ENCODE measurements at regions of chr5 and their contacts with region 1.

Region 1: DNA sequence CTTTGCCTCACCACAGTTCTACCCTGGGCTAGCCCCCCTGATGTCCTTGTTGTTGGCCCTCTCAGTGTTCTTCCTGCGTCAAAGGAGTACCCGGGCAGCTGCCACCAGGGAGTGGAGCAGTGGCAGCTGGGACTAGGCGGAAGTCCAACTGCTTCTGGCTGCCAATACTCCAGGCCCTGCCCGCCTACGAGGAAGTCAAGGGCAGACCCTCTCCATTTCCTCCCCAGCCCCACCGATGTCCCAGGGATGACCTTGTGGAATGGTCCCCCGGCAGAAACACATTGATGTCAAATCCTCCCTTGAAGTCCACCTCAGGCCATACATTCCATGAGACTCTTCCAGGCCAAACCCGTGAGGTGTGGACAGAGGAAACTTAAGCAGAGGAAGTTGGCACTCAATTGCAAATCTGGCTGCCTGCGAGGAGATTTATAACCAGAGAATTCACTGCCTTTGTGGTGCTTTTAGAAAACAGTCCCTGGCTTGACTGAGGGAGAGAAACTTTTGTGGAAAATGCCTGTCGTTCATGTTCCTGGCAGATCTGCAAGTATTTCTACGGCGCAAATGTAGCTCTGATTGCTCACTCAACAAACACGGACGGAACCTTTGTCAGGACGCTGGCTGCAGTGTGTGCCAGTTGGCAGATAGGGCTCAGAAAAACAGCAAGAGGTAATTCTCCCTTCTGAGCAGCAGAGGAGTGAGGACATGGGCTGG is 339.7 kb downstream of the RAB3C start:
- DNase-seq: peak; percentile 72
- ATAC-seq: peak; percentile 93

Region 2: DNA sequence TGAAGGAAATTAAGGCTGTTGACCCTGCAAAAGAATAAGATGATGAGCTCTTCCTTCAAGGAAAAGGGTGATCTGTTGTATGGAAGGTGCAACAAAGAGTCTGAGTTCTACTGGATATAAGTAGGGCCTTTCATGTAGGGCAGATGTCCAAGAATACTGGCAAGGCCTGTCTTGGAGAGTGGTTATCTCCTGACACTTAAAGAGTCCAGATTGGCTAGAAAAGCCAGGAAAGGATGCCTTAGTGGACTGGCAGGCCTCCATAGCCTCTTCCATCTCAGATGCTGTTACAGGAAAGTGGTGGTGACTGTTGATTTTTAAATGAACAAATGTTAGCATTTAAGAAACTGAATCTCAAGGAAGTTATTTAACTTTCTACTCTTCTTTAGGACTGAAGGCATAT is 56.5 kb after region 1 on chr5:
- intact Hi-C with region 1: loop called (anchors 5 kb)
- DNase-seq: no peak
- ATAC-seq: peak; percentile 49

Region 3: GRCh38 chr5:58993461-58993860 is 70.8 kb after region 1 on chr5:
- intact Hi-C with region 1: loop called (anchors 5 kb)
- DNase-seq: no peak
- ATAC-seq: no peak

Measured in Right ventricle myocardium inferior (tissue), 1 donor.